Endothelial cell of umbilical vein (primary cell): ENCODE measurements at regions of chr2 and their contacts with region 1.

Region 1: GRCh38 chr2:112584134-112584890 is at the start of gene CHCHD5:
- DNase-seq: peak; percentile 94
- H3K4me3 ChIP-seq: peak within 1 kb of the TSS; percentile 1 to 78 (median 61)
- H3K27ac ChIP-seq: peak within 1 kb of the TSS; percentile 76
- H3K4me1 ChIP-seq: peaks cover 14% of the 10 kb centered on the region
- H3K27me3 ChIP-seq: no peaks in the 10 kb centered on the region
- CTCF ChIP-seq: no peak
- POLR2A ChIP-seq: peak; percentile 96
- total RNA-seq, gene CHCHD5: 22.2 and 23.6 TPM in 2 replicates

Region 2: GRCh38 chr2:112054847-112055729 is 529.2 kb before region 1 on chr2 and contains the start of gene TMEM87B:
- CTCF ChIA-PET with region 1: no interaction called
- POLR2A ChIA-PET with region 1: no interaction called
- dilution Hi-C with region 1: no loop called
- intact Hi-C with region 1: loop called (anchors 5 kb)
- DNase-seq: peak; percentile 99
- H3K4me3 ChIP-seq: peak within 1 kb of the TSS; percentile 45 to 83 (median 81)
- H3K27ac ChIP-seq: peak within 1 kb of the TSS; percentile 71
- H3K4me1 ChIP-seq: peaks cover 22% of the 10 kb centered on the region
- H3K27me3 ChIP-seq: no peaks in the 10 kb centered on the region
- CTCF ChIP-seq: no peak
- POLR2A ChIP-seq: peak; percentile 89
- total RNA-seq, gene TMEM87B: 21.5 and 22.1 TPM in 2 replicates

Region 3: GRCh38 chr2:112275306-112275886 is 308.9 kb before region 1 on chr2 and contains the start of gene ZC3H6:
- CTCF ChIA-PET with region 1: no interaction called
- POLR2A ChIA-PET with region 1: no interaction called
- dilution Hi-C with region 1: no loop called
- intact Hi-C with region 1: loop called (anchors 5 kb)
- DNase-seq: peak; percentile 98
- H3K4me3 ChIP-seq: peak within 1 kb of the TSS; percentile 67 to 98 (median 94)
- H3K27ac ChIP-seq: peak within 1 kb of the TSS; percentile 98
- H3K4me1 ChIP-seq: peaks cover 9% of the 10 kb centered on the region
- H3K27me3 ChIP-seq: no peaks in the 10 kb centered on the region
- CTCF ChIP-seq: peak in 1 of 2 donors; percentile 12
- POLR2A ChIP-seq: peak; percentile 95
- total RNA-seq, gene ZC3H6: 2.5 and 3.0 TPM in 2 replicates

Region 4: GRCh38 chr2:112516801-112517200 is 67.5 kb before region 1 on chr2:
- CTCF ChIA-PET with region 1: no interaction called
- POLR2A ChIA-PET with region 1: no interaction called
- dilution Hi-C with region 1: no loop called
- intact Hi-C with region 1: no loop called
- DNase-seq: no peak
- H3K4me3 ChIP-seq: no peak overlapping the region
- H3K27ac ChIP-seq: no peak overlapping the region
- H3K4me1 ChIP-seq: no peaks in the 10 kb centered on the region
- H3K27me3 ChIP-seq: no peaks in the 10 kb centered on the region
- CTCF ChIP-seq: no peak
- POLR2A ChIP-seq: no peak

Region 5: DNA sequence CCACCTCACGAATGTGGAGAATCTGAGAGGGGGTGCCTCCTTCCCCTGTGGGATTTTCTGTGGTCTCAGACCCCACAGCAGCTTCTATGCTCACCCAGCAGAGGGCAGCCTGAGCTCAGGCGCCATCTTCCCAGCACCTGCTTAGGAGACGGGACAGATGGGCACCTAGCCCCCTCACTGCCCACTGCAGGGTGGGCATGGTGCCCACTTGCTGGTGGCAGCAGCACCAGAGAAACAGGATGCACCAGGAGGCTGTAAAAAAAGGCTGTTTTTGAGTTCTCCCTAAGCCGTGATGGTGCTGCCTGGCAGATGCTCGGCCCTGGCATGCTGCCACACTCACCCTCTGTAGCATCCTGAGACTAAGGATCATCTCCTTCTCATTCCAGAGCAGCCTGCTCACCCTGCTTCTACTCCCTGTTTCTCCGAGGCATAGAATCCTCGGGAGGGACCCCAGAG is 42.3 kb after region 1 on chr2:
- CTCF ChIA-PET with region 1: interaction called, 4 read pairs
- POLR2A ChIA-PET with region 1: no interaction called
- dilution Hi-C with region 1: no loop called
- intact Hi-C with region 1: loop called (anchors 1 kb)
- DNase-seq: peak; percentile 86
- H3K4me3 ChIP-seq: peak overlapping the region in 1 of 3 experiments; percentile 14
- H3K27ac ChIP-seq: peak overlapping the region; percentile 91
- H3K4me1 ChIP-seq: peaks cover 73% of the 10 kb centered on the region
- H3K27me3 ChIP-seq: no peaks in the 10 kb centered on the region
- CTCF ChIP-seq: peak; percentile 93
- POLR2A ChIP-seq: no peak

Region 6: GRCh38 chr2:112685271-112685884 is 101.1 kb after region 1 on chr2:
- CTCF ChIA-PET with region 1: interaction called, 3 read pairs
- POLR2A ChIA-PET with region 1: interaction called, 6 read pairs
- dilution Hi-C with region 1: no loop called
- intact Hi-C with region 1: loop called (anchors 1 kb)
- DNase-seq: no peak
- H3K4me3 ChIP-seq: no peak overlapping the region
- H3K27ac ChIP-seq: no peak overlapping the region
- H3K4me1 ChIP-seq: peaks cover 27% of the 10 kb centered on the region
- H3K27me3 ChIP-seq: no peaks in the 10 kb centered on the region
- CTCF ChIP-seq: peak in 1 of 2 donors; percentile 16
- POLR2A ChIP-seq: no peak

Region 7: GRCh38 chr2:112726497-112727190 is 142.3 kb after region 1 on chr2:
- CTCF ChIA-PET with region 1: interaction called, 9 read pairs
- POLR2A ChIA-PET with region 1: interaction called, 3 read pairs
- dilution Hi-C with region 1: no loop called
- intact Hi-C with region 1: loop called (anchors 1 kb)
- DNase-seq: peak; percentile 86
- H3K4me3 ChIP-seq: no peak overlapping the region
- H3K27ac ChIP-seq: no peak overlapping the region
- H3K4me1 ChIP-seq: peaks cover 3% of the 10 kb centered on the region
- H3K27me3 ChIP-seq: no peaks in the 10 kb centered on the region
- CTCF ChIP-seq: peak; percentile 95 to 97
- POLR2A ChIP-seq: no peak